WTC11 (cell line): ENCODE measurements at regions of chr19 and their contacts with region 1.

Region 1: GRCh38 chr19:11374433-11375142 is at the start of gene SWSAP1:
- DNase-seq: peak; percentile 98
- ATAC-seq: peak; percentile 93
- H3K4me3 Mint-ChIP-seq: no peak within 1 kb of the TSS
- H3K27ac Mint-ChIP-seq: no peak within 1 kb of the TSS; the same call in 1 of the 2 replicates
- H3K4me1 Mint-ChIP-seq: peaks cover 19% of the 10 kb centered on the region
- H3K27me3 Mint-ChIP-seq: no peaks in the 10 kb centered on the region
- CTCF ChIP-seq: no peak
- total RNA-seq, gene SWSAP1: 2.4 to 3.9 TPM (median 3.0 TPM) in 3 replicates

Region 2: DNA sequence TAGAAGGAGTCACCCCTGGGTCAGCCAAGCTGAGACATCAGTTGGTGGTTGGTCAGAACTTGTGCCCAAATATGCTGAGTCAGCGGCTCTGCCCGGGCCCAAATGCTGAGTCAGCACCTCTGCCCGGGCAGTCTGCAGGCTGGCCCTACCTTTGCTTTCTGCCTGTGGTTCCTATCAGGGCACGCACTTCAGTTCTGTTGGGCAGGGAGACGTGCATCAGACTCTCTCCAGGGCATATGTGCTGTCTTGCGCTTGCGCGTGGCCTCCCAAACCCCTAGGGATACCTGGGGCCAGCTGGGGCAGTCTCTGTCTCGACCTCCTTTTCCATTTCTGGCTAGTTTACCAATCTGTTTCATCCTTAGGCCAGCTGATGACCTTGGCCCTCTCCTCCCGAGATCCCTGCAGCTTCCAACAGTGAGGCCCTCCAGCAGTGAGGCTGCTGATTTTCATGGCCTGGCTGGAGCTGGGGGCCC is 309.7 kb before region 1 on chr19:
- CTCF ChIA-PET with region 1: no interaction called
- POLR2A ChIA-PET with region 1: no interaction called
- DNase-seq: peak; percentile 36
- ATAC-seq: no peak
- H3K4me3 Mint-ChIP-seq: no peak overlapping the region
- H3K27ac Mint-ChIP-seq: peak overlapping the region; percentile 65
- H3K4me1 Mint-ChIP-seq: peaks cover 15% of the 10 kb centered on the region
- H3K27me3 Mint-ChIP-seq: no peaks in the 10 kb centered on the region
- CTCF ChIP-seq: no peak

Region 3: GRCh38 chr19:11321191-11322126 is 53.1 kb before region 1 on chr19:
- CTCF ChIA-PET with region 1: interaction called, 14 read pairs
- POLR2A ChIA-PET with region 1: interaction called, 3 read pairs
- DNase-seq: no peak
- ATAC-seq: peak; percentile 53
- H3K4me3 Mint-ChIP-seq: no peak overlapping the region
- H3K27ac Mint-ChIP-seq: no peak overlapping the region; the same call in 1 of the 2 replicates
- H3K4me1 Mint-ChIP-seq: peaks cover 16% of the 10 kb centered on the region
- H3K27me3 Mint-ChIP-seq: no peaks in the 10 kb centered on the region; the same call in 1 of the 2 replicates
- CTCF ChIP-seq: no peak

Region 4: DNA sequence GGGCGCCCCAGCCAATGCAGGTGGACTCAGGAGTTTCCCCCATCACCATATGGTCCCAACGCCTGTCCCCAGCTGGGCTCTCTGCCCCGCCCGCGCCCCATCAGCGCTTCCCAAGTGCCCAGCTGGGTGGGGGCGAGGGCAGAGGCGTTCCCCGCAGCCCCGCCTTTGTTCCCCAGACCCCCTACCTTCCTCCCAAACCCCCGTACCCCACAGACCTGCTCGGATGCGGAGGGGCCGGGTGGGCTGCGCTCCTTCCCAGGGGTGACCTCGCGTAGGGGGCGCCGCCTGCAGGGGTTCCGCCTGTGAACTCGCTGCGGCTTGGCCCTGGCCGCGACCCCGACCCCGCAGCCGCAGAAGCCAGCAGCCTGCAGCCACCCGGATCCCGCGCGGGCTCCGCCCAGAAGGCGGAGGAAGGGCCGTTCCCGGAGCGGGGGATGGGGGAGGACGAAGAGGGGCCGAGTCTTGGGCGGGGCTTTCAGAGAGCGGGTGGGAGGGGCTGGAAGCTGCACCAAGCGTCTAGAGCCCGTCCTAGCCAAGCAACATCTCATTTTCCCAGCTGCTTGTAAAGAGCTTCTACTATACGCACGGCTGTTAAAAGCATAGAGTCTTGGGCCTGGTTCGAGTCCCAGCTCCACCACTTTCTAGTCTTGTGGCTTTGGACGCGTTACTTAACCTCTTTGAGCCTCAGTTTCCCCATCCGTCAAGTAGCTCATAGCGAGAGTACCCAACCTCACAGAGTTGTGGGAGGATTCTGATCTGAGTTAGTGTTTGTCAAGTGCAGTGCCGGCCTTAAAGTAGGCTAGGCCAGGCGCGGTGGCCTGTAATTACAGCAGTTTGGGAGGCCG is 35.1 kb before region 1 on chr19 and contains the start of gene RAB3D:
- CTCF ChIA-PET with region 1: interaction called, 12 read pairs
- POLR2A ChIA-PET with region 1: interaction called, 3 read pairs
- DNase-seq: peak; percentile 98
- ATAC-seq: peak; percentile 99
- H3K4me3 Mint-ChIP-seq: peak within 1 kb of the TSS; percentile 81
- H3K27ac Mint-ChIP-seq: peak within 1 kb of the TSS; percentile 41; the same call in 1 of the 2 replicates
- H3K4me1 Mint-ChIP-seq: peaks cover 7% of the 10 kb centered on the region
- H3K27me3 Mint-ChIP-seq: no peaks in the 10 kb centered on the region
- CTCF ChIP-seq: no peak
- total RNA-seq, gene RAB3D: 18.9 to 27.8 TPM (median 27.0 TPM) in 3 replicates

Region 5: DNA sequence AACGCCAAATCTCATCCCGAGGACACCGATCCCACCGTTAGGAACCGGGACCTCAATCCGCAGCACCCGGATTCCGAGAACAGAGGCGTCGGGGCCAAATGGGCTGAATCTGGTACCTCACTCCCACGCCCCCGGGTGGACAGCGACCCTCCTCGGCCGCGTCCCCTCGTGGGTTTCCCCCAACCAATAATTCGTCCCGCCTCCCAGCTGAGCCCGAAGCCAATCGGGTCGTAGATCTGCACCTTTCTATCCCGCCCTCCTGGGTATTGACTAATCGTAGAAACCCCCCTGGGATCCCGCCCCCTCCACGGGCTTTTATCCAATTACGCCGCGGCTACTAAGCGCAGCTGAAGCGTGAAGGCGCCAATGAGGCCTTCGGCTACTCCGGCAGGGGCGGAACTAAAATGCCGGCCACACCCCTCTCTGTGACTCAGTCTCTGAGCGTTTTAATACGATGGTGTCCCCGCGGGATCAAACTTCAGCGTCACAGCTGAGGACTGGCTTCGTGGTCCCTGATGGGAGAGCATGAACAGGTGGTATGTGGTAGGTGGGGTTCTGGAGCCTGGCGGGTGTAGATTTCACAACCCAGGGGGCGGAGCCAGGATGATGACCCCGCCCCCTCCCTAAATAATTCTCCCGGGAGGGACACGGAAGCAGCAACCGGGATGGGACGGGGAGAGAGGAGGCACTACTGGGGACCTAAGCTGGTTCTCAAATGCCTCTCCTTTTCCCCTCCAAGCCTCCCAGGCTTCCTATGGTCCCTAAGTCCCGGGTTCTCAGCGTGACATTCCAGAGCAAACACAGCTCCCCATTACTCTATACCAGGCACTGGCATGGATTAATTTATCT is 28.3 kb before region 1 on chr19 and contains the starts of genes CCDC159 and TMEM205:
- CTCF ChIA-PET with region 1: interaction called, 11 read pairs
- POLR2A ChIA-PET with region 1: interaction called, 10 read pairs
- DNase-seq: peak; percentile 99
- ATAC-seq: peak; percentile 96
- H3K4me3 Mint-ChIP-seq: peak within 1 kb of the TSS; percentile 95
- H3K27ac Mint-ChIP-seq: peak within 1 kb of the TSS; percentile 87
- H3K4me1 Mint-ChIP-seq: peaks cover 24% of the 10 kb centered on the region
- H3K27me3 Mint-ChIP-seq: peaks cover 20% of the 10 kb centered on the region; the same call in 1 of the 2 replicates
- CTCF ChIP-seq: no peak
- total RNA-seq, gene CCDC159: 5.5 to 8.5 TPM (median 6.8 TPM) in 3 replicates
- total RNA-seq, gene TMEM205: 69.9 to 78.3 TPM (median 76.0 TPM) in 3 replicates

Region 6: DNA sequence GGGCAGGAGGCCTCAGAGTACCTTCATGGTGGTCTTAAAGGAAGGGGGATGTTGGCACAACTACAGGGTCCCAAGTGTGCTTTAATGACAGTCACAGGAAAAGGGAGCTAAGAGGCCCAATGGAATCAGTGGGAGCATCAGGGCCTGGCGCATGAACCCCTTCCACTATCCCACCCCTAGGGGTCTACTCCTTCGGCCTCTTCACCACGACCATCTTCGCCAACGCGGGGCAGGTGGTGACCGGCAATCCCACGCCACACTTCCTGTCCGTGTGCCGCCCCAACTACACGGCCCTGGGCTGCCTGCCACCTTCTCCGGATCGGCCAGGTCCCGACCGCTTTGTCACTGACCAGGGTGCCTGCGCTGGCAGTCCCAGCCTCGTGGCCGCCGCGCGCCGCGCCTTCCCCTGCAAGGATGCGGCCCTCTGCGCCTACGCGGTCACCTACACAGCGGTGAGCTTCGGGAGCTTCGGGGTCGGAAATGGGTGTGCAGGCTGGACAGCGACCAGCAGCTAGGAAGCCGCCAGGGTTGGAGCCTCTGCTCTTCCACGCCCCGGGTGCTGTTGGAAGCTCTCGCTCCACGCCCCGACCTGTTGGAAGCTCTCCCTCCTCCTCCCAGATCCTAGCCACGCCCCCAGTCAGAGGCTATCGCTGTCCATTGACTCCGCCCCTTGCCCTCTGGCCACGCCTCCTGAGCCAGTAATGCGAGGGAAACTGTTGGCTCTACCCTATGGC is 13.4 kb before region 1 on chr19:
- CTCF ChIA-PET with region 1: interaction called, 33 read pairs
- POLR2A ChIA-PET with region 1: interaction called, 7 read pairs
- DNase-seq: peak; percentile 100
- ATAC-seq: peak; percentile 91
- H3K4me3 Mint-ChIP-seq: peak overlapping the region; percentile 76
- H3K27ac Mint-ChIP-seq: no peak overlapping the region
- H3K4me1 Mint-ChIP-seq: peaks cover 16% of the 10 kb centered on the region
- H3K27me3 Mint-ChIP-seq: peaks cover 53% of the 10 kb centered on the region
- CTCF ChIP-seq: no peak

Region 7: GRCh38 chr19:11422163-11423021 is 47.8 kb after region 1 on chr19:
- CTCF ChIA-PET with region 1: interaction called, 18 read pairs
- POLR2A ChIA-PET with region 1: interaction called, 115 read pairs
- DNase-seq: peak; percentile 99
- ATAC-seq: peak; percentile 70
- H3K4me3 Mint-ChIP-seq: peak overlapping the region; percentile 87
- H3K27ac Mint-ChIP-seq: peak overlapping the region; percentile 97
- H3K4me1 Mint-ChIP-seq: peaks cover 15% of the 10 kb centered on the region
- H3K27me3 Mint-ChIP-seq: peaks cover 29% of the 10 kb centered on the region
- CTCF ChIP-seq: no peak

Region 8: GRCh38 chr19:11435058-11435832 is 60.7 kb after region 1 on chr19 and contains the starts of genes ODAD3 and PRKCSH:
- CTCF ChIA-PET with region 1: interaction called, 25 read pairs
- POLR2A ChIA-PET with region 1: interaction called, 5 read pairs
- DNase-seq: peak; percentile 99
- ATAC-seq: peak; percentile 91
- H3K4me3 Mint-ChIP-seq: peak within 1 kb of the TSS; percentile 96
- H3K27ac Mint-ChIP-seq: peak within 1 kb of the TSS; percentile 97
- H3K4me1 Mint-ChIP-seq: peaks cover 11% of the 10 kb centered on the region
- H3K27me3 Mint-ChIP-seq: no peaks in the 10 kb centered on the region
- CTCF ChIP-seq: peak; percentile 95
- total RNA-seq, gene ODAD3: 4.1 to 5.8 TPM (median 4.8 TPM) in 3 replicates
- total RNA-seq, gene PRKCSH: 396 to 405 TPM (median 402 TPM) in 3 replicates